Esophagus muscularis mucosa (tissue), 4 donors: ENCODE measurements at regions of chr14 and their contacts with region 1.

Region 1: GRCh38 chr14:30005114-30005808 is 77.6 kb upstream of the PRKD1 start:
- DNase-seq: no peak
- H3K4me3 ChIP-seq: no peak overlapping the region
- H3K27ac ChIP-seq: no peak overlapping the region
- H3K4me1 ChIP-seq: peaks cover 0 to 3% (median 1%) of the 10 kb centered on the region in 4 donors
- H3K27me3 ChIP-seq: no peaks in the 10 kb centered on the region
- CTCF ChIP-seq: peak; percentile 76 to 82 (median 80)
- EP300 ChIP-seq: no peak
- POLR2A ChIP-seq: no peak

Region 2: GRCh38 chr14:29548948-29549370 is 456.3 kb before region 1 on chr14:
- intact Hi-C with region 1: loop called (anchors 1 kb)
- DNase-seq: no peak
- H3K4me3 ChIP-seq: no peak overlapping the region
- H3K27ac ChIP-seq: no peak overlapping the region
- H3K4me1 ChIP-seq: peaks cover 0 to 18% (median 9%) of the 10 kb centered on the region in 4 donors
- H3K27me3 ChIP-seq: no peaks in the 10 kb centered on the region
- CTCF ChIP-seq: peak; percentile 56 to 70 (median 70)
- EP300 ChIP-seq: no peak
- POLR2A ChIP-seq: no peak

Region 3: DNA sequence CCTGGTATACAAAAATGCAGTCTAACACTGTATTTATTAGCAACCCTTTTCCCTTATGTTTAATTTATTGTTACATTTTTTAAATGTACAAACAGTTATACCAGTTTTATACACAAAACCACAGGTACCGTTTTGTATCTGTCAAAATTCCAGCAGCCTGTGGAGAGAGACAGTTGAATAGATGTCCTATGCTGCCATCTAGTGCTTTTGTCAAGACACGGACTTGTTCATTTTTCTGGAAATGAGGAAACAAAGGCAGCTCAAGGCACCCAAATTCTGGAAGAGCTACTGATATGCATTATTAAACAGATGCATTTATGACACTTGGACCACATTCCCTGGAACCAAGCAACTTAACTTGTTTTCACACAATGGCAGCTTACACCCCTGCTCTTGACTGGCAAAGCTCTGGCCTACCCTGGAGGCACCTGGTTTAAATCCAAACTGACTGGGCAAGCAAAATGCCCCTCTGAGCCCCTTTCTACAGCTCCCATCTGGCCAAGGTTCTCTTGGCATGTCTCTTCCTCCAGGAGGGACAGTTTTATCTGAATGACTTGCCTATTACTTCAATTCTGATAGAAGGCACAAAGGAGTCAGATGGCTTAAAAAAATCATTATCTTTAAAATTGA is 209.3 kb after region 1 on chr14:
- intact Hi-C with region 1: loop called (anchors 5 kb)
- DNase-seq: no peak
- H3K4me3 ChIP-seq: no peak overlapping the region
- H3K27ac ChIP-seq: no peak overlapping the region
- H3K4me1 ChIP-seq: peaks cover 0 to 17% (median 14%) of the 10 kb centered on the region in 4 donors
- H3K27me3 ChIP-seq: no peaks in the 10 kb centered on the region
- CTCF ChIP-seq: peak; percentile 63 to 67 (median 64)
- EP300 ChIP-seq: no peak
- POLR2A ChIP-seq: no peak

Region 4: DNA sequence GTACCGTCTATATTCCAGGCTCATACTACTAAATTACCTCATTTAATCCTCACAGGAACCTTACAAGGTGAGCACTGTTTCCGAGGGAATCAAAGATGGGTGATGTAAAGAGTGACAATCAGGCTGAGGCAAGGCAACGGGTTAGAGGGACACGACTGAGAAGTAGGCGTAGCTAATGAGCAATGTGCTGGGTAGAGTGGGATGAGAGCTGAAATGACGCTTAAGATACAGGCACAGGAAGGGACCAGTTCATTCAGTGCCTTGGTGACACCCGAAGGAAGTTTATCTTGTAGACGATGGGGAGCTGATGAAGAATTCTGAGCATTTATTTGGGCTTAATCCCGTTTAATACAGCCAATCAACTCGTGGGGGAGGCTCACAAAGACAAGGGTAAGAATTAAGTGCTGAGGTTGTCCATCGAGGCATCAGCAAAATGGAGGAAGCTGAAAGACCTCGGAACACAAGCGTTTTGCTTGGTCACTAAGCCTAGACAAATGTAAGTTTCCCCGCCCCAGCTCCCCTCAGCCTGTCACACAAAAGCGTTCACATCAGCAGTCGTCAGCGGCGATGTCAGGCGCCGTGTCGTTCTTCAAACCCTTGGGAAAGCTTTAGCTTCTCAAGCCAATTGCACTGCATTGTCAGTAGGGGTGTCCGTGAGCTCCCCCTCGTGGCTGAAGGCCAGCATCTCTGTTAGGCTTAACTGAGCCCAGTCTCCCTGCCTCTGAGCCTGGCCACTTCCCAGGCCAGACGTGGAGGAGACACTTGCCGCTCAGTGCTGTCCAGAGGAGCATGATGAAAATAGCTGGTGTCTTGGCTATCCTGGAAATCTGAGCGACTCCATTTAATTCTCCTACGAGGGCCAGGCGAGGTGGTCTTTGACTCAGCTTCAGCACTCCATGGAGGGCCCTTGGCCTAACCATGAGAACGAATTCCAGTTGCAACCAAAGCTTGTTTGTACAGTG is 265.2 kb after region 1 on chr14:
- intact Hi-C with region 1: loop called (anchors 5 kb)
- DNase-seq: peak; percentile 94
- H3K4me3 ChIP-seq: peak overlapping the region in 3 of 4 donors; percentile 30 to 46 (median 32)
- H3K27ac ChIP-seq: peak overlapping the region in 1 of 4 donors; percentile 31
- H3K4me1 ChIP-seq: peaks cover 0 to 27% (median 18%) of the 10 kb centered on the region in 4 donors
- H3K27me3 ChIP-seq: no peaks in the 10 kb centered on the region
- CTCF ChIP-seq: peak; percentile 69 to 89 (median 74)
- EP300 ChIP-seq: no peak
- POLR2A ChIP-seq: no peak